ENCODE measurements at regions of chr9 and their contacts with region 1.

Region 1: DNA sequence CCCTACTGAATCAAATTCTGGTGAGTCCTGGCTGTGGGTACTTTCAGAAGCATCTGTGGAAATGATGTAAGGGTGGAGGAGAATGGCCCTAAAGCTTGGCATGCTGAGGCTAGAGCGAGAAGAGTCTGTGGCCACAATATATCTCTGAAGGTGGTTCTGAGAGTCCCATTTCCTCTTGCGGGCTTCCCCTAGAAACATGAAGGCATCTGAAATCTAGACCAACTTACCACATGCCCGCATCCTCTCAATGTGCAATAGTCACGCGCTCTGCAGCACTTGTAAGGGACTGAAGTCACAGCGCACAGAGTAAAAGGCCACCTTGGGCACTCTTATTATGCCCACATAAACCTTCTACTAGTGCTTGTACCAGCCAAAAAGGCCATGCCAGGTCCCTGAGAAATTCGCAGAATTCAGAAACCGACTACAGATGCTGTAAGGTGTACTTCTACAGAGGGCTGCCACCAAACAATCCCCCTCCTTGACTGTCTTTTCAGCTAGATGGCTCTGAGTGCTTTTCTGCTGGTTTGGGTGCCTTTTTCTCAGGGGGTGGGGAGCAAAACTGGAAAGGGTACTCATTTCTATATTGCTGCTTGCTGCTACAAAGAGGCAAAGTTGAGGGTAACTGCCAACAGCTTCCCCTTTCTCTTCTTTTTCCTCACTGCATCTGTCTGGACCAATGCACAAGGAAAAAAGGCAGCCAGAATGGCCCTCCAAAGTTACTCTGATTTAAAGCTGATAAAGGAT is 107.3 kb downstream of the ZDHHC21 start:
- DNase-seq: no peak
- ATAC-seq: no peak

Region 2: GRCh38 chr9:14563902-14564624 is 21.8 kb before region 1 on chr9:
- intact Hi-C with region 1: loop called (anchors 1 kb)
- DNase-seq: no peak
- ATAC-seq: no peak